ENCODE measurements at regions of chr11 and their contacts with region 1.

Region 1: DNA sequence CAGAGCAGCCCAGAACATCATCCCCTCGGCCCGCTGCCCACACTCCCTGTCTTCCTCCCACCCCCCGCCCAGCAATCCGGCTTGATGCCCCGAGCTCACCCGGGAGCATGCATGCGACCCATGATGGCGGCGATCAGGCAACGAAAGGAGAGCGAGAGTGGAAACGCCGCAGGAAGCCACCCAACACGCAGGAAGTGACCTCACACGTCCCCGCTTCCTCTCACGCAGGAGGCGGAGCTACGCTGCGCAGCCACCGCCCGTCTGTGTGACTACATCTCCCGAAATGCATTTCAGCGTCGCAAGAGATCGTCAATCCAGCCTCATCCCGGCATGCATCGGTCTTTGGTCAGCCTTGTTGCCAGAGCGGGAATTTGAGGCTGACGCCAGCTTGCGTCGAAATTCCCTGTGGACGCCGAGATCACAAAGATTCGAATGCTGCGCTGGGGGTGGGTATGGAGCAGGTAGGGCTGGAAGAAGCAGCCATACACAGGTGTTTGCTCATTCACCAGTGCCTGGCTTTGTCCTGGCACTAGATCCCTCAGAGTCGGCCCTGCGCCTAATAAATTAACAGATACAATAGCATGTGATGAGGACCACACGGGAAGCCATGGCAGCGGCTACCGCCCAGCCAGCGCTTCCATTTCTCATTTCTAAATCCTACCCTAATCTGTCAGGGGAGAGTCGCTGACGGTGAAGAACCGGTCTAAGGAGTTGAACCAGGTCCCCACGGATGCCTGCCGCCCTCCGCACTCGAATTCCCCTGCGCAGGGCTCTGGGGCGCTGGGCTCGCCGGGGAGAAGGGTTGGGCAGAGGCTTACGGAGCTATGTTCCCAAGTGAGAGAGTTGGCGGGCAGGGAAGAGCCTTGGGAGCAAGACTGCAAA is at the start of gene RPS13:
- DNase-seq: peak; percentile 97
- ATAC-seq: peak; percentile 96
- H3K4me3 ChIP-seq: peak within 1 kb of the TSS; percentile 93 to 99 (median 98)
- H3K27ac ChIP-seq: peak within 1 kb of the TSS; percentile 83
- H3K4me1 ChIP-seq: peaks cover 45% of the 10 kb centered on the region
- H3K27me3 ChIP-seq: no peaks in the 10 kb centered on the region; a peak in 1 of 5 replicates
- CTCF ChIP-seq: no peak
- EP300 ChIP-seq: no peak
- POLR2A ChIP-seq: peak; percentile 97 to 98
- RAD21 ChIP-seq: no peak
- total RNA-seq, gene RPS13: 1,542 and 1,735 TPM in 2 replicates

Region 2: GRCh38 chr11:16809886-16810668 is 267.7 kb before region 1 on chr11:
- CTCF ChIA-PET with region 1: no interaction called
- POLR2A ChIA-PET with region 1: no interaction called
- in situ Hi-C with region 1: loop called (anchors 10 kb)
- intact Hi-C with region 1: no loop called
- DNase-seq: no peak
- ATAC-seq: no peak
- H3K4me3 ChIP-seq: no peak overlapping the region
- H3K27ac ChIP-seq: no peak overlapping the region
- H3K4me1 ChIP-seq: peaks cover 45% of the 10 kb centered on the region
- H3K27me3 ChIP-seq: no peaks in the 10 kb centered on the region
- CTCF ChIP-seq: no peak
- EP300 ChIP-seq: no peak
- POLR2A ChIP-seq: no peak
- RAD21 ChIP-seq: no peak